Sigmoid colon (tissue), 7 donors: ENCODE measurements at regions of chrX and their contacts with region 1.

Region 1: DNA sequence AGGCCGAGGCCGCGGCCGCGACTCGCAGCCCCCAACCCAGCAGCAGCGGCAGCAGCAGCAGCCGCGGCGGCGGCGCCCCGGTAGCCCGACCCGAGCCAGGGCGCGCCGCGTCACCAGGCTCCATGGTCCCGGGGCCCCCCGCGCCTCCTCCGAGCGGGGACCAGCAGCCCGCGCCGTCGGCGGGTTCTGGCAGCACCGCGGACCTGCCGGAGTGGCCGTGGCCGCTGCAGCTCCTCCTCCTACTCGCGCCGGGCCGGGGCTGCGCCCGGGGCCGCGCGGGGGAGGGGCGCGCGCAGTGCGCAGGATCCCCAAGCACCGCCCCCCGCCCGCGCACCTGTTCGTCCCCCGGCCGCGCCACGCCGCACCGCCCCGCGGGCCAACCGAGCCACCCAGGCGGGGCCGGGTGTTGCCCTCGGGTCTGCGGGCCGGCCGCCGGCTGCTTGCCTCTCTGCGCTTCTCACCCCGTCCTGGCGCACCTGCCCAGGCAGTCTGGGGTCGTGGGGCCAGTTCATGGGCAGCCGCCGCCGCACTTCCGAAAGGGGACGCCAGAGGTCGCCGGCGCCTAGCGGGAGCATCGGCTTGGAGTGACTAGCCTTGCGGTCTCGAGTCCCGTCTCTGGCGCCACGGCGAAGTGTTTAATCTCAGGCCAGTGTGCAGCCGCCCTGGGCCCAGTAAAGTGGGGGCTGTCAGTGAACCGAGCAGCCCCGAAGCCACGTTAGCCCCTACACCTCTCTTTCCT is at the start of gene SLC9A7:
- DNase-seq: peak; percentile 81
- H3K4me3 ChIP-seq: peak within 1 kb of the TSS; percentile 10 to 58 (median 52)
- H3K27ac ChIP-seq: peak within 1 kb of the TSS in 3 of 4 donors; percentile 19 to 26 (median 21)
- H3K4me1 ChIP-seq: peaks cover 0 to 9% (median 3%) of the 10 kb centered on the region in 4 donors
- H3K27me3 ChIP-seq: no peaks in the 10 kb centered on the region
- CTCF ChIP-seq: peak; percentile 28 to 77 (median 52)
- EP300 ChIP-seq: no peak
- POLR2A ChIP-seq: no peak
- total RNA-seq, gene SLC9A7: 1.8 to 8.8 (median 3.0) TPM

Region 2: GRCh38 chrX:46791927-46792839 is 33.1 kb after region 1 on chrX:
- intact Hi-C with region 1: loop called (anchors 5 kb)
- DNase-seq: no peak
- H3K4me3 ChIP-seq: no peak overlapping the region
- H3K27ac ChIP-seq: no peak overlapping the region
- H3K4me1 ChIP-seq: peaks cover 0 to 2% (median 0%) of the 10 kb centered on the region in 4 donors
- H3K27me3 ChIP-seq: no peaks in the 10 kb centered on the region
- CTCF ChIP-seq: no peak
- EP300 ChIP-seq: no peak
- POLR2A ChIP-seq: no peak

Region 3: DNA sequence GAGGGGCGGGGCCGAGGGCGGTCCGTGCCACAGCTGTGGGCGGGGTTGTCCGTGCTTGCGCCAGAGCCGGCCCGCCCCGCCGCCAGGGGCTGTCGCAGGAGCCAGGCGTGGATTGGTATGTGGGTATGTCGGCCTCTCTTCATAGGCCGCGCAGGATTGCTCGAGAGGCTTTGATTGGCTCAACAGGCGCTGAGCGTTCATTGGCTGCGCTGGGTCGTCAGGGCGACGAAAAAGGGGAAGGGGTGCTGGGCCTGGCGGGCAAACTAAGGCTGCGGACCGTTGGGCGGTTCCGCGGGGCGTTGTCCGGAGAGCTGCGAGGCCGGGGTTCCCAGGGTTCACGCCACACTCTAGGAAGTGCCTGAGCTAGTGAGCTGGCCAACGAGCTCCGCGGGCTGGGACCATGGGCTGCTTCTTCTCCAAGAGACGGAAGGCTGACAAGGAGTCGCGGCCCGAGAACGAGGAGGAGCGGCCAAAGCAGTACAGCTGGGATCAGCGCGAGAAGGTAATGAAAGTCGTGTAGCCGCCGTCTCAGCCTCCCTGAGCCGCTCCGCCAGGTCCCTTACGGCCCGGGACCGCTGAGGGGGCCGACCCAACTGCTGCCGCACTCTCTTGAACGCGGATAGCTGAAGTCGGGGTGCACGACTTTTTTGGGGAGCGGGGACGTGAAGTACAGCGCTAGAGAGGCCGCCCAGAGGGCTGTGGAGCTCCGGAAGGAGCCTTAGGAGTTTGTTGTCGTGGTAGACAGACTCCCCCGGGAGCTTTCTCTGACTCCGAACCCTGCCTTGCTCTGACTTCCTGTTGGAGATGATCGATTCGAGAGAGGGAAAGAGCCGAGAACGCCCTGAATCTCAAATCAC is 77.9 kb after region 1 on chrX and contains the start of gene RP2:
- intact Hi-C with region 1: loop called (anchors 10 kb)
- DNase-seq: peak; percentile 96
- H3K4me3 ChIP-seq: peak within 1 kb of the TSS; percentile 55 to 69 (median 68)
- H3K27ac ChIP-seq: peak within 1 kb of the TSS; percentile 86 to 92 (median 87)
- H3K4me1 ChIP-seq: peaks cover 0 to 33% (median 16%) of the 10 kb centered on the region in 4 donors
- H3K27me3 ChIP-seq: no peaks in the 10 kb centered on the region
- CTCF ChIP-seq: no peak
- EP300 ChIP-seq: no peak
- POLR2A ChIP-seq: peak; percentile 81 to 82
- total RNA-seq, gene RP2: 8.0 to 11.9 (median 9.8) TPM

Region 4: GRCh38 chrX:46873746-46874145 is 114.7 kb after region 1 on chrX:
- intact Hi-C with region 1: no loop called
- DNase-seq: no peak
- H3K4me3 ChIP-seq: no peak overlapping the region
- H3K27ac ChIP-seq: no peak overlapping the region
- H3K4me1 ChIP-seq: no peaks in the 10 kb centered on the region
- H3K27me3 ChIP-seq: no peaks in the 10 kb centered on the region
- CTCF ChIP-seq: no peak
- EP300 ChIP-seq: no peak
- POLR2A ChIP-seq: no peak

Region 5: GRCh38 chrX:46912098-46912602 is 153.1 kb after region 1 on chrX and contains the start of gene JADE3:
- intact Hi-C with region 1: loop called (anchors 5 kb)
- DNase-seq: peak; percentile 85
- H3K4me3 ChIP-seq: peak within 1 kb of the TSS; percentile 55 to 76 (median 64)
- H3K27ac ChIP-seq: peak within 1 kb of the TSS; percentile 72 to 82 (median 78)
- H3K4me1 ChIP-seq: peaks cover 0 to 4% (median 0%) of the 10 kb centered on the region in 4 donors
- H3K27me3 ChIP-seq: no peaks in the 10 kb centered on the region
- CTCF ChIP-seq: no peak
- EP300 ChIP-seq: no peak
- POLR2A ChIP-seq: no peak
- total RNA-seq, gene JADE3: 5.3 to 7.8 (median 7.0) TPM

Region 6: DNA sequence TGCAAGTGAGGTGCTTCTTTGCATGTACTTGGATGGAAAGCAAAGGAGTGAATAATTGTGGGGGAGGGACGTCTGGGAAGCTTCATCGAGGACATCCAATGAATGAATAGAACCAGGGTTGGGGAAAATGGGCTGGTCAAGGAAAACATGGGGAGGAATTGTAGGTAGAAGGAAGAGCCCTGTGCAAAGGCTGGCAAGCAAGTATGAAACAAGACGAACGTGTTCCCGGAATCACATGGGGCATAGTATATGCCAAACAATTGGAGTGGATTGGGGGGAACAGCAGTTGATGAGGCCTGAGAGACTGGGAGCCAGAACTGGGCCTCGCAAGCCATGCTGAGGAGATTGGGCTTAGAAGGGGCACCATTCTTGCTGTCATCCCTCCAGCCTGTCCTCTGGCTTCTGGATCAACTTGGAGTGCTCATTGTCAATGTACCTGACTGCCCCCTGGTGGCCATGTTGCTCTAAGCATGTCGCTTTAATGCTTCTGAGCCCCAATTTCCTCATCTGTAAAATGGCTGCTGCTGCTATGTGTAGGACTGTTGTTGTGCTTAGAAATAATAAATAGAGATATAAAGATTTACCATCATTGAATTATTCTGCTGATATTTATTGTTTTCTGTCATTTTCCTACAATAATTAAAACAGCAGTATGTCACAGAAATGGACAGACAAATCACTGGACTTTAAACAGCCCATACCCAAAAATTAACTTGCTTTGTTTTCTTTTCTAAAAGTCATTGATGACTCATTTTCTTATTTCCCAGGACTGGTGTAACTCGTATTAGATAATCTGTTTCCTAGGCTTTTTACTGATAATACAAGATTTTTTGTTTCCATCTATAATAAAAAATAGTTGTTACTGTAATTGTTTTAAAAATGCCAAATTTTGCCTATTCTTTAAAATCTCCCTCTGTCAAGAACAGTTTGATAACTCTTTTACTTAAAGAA is 219.5 kb after region 1 on chrX:
- intact Hi-C with region 1: loop called (anchors 5 kb)
- DNase-seq: peak; percentile 76
- H3K4me3 ChIP-seq: no peak overlapping the region
- H3K27ac ChIP-seq: peak overlapping the region in 3 of 4 donors; percentile 6 to 40 (median 33)
- H3K4me1 ChIP-seq: peaks cover 0 to 4% (median 0%) of the 10 kb centered on the region in 4 donors
- H3K27me3 ChIP-seq: no peaks in the 10 kb centered on the region
- CTCF ChIP-seq: peak; percentile 25 to 41 (median 28)
- EP300 ChIP-seq: no peak
- POLR2A ChIP-seq: no peak

Region 7: GRCh38 chrX:47030339-47030738 is 271.3 kb after region 1 on chrX:
- intact Hi-C with region 1: loop called (anchors 5 kb)
- DNase-seq: no peak
- H3K4me3 ChIP-seq: no peak overlapping the region
- H3K27ac ChIP-seq: no peak overlapping the region
- H3K4me1 ChIP-seq: no peaks in the 10 kb centered on the region
- H3K27me3 ChIP-seq: peaks cover 0 to 4% (median 0%) of the 10 kb centered on the region in 3 donors
- CTCF ChIP-seq: peak in 2 of 4 experiments; percentile 28 to 48
- EP300 ChIP-seq: no peak
- POLR2A ChIP-seq: no peak